ENCODE measurements at regions of chrX and their contacts with region 1.

Region 1: DNA sequence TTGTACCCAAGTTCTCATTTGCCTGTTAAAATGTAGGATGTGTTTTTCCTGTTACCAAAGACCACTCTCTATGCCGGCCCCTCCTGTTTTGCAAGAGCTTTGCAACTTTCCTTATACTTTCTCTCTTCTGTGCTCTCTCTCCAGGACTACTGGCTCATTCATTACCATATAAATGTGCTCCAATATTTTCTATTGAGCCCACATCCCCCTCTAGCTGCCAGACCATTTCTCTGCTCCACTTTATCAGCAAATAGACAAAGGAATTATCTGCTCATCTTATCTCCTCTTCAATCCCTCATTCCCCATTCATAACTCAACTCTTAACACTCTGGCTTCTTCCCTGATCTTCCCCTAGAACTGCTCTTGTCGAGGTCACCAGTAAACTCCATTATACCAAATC is 33.6 kb downstream of the RPGR start:
- DNase-seq: no peak
- H3K4me3 ChIP-seq: no peak overlapping the region
- H3K27ac ChIP-seq: no peak overlapping the region
- H3K4me1 ChIP-seq: no peaks in the 10 kb centered on the region
- CTCF ChIP-seq: no peak

Region 2: GRCh38 chrX:38437093-38437492 is 143.4 kb after region 1 on chrX:
- CTCF ChIA-PET with region 1: no interaction called
- POLR2A ChIA-PET with region 1: interaction called, 12 read pairs
- intact Hi-C with region 1: no loop called
- DNase-seq: no peak
- H3K4me3 ChIP-seq: no peak overlapping the region
- H3K27ac ChIP-seq: no peak overlapping the region
- H3K4me1 ChIP-seq: no peaks in the 10 kb centered on the region
- CTCF ChIP-seq: no peak

Region 3: DNA sequence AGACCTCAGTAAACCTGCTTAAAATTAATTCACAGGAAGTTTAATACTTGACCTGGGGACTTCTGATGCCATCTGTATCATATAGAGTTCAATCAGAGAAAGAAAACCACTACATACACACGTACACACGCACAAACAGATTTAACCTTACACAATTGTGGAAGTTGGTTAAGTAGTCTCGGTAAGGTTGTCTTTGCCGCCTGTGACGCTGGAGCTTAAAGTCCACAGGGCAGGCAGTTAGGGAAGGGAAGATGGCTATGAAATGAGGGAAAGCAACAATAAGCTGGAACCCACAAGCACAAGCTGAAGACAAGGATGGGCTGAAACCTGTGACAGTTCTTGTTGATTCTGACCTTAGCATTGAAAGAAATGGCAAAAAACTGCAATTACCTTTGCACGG is 225.9 kb after region 1 on chrX:
- CTCF ChIA-PET with region 1: no interaction called
- POLR2A ChIA-PET with region 1: no interaction called
- intact Hi-C with region 1: no loop called
- DNase-seq: no peak
- H3K4me3 ChIP-seq: no peak overlapping the region
- H3K27ac ChIP-seq: no peak overlapping the region
- H3K4me1 ChIP-seq: no peaks in the 10 kb centered on the region
- CTCF ChIP-seq: no peak

Measured in OCI-LY7 (cell line).